Left lung (tissue), 14 donors: ENCODE measurements at regions of chr7 and their contacts with region 1.

Region 1: DNA sequence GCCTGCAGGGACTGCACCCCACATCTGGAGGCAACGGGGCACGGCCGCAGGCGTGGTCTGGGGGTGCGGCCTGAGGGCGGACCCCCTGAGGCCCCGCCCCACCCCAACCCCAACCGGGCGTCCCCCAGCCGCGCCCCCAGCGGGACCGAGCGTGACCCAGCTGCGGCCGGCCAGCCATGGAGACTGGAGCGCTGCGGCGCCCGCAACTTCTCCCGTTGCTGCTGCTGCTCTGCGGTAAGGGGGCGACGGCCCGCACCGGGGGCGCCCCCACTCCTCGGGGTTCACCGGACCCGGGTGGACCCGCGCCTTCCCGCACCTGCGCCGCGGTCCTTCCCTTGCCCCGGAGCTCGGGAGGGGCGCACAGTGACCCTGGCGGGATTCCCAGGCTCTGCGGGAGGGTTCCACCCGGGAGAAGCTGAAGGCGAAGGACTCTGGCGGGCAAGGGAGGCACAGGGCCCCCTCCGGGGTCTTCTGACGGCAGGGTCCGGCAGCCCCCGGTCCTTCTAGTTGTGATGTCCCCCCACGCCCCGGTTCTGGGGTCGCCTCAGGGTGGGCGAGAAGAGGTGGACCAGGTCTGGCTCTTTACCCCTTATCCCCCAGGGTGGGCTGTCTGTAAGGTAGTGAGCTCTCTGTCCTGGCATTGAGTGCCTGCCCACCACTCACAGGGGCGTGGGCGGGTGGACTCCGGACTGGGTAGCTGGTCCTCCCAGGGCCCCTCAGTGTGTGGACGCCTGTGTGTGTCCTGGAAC is at the start of gene RAMP3:
- DNase-seq: peak in 1 of 4 donors; percentile 81
- ATAC-seq: peak; percentile 8
- H3K4me3 ChIP-seq: peak within 1 kb of the TSS; percentile 6 to 47
- H3K27ac ChIP-seq: peak within 1 kb of the TSS; percentile 53 to 76
- H3K4me1 ChIP-seq: peaks cover 0 to 13% of the 10 kb centered on the region in 2 donors
- H3K27me3 ChIP-seq: peaks cover 9 to 34% of the 10 kb centered on the region in 2 donors
- CTCF ChIP-seq: no peak
- polyA plus RNA-seq, gene RAMP3: 12.5 to 28.1 (median 20.4) TPM

Region 2: GRCh38 chr7:45259966-45260646 is 102.3 kb after region 1 on chr7:
- intact Hi-C with region 1: loop called (anchors 2 to 10 kb)
- DNase-seq: peak; percentile 25 to 93 (median 57)
- ATAC-seq: peak; percentile 96
- H3K4me3 ChIP-seq: no peak overlapping the region
- H3K27ac ChIP-seq: no peak overlapping the region
- H3K4me1 ChIP-seq: peaks cover 0 to 7% of the 10 kb centered on the region in 2 donors
- H3K27me3 ChIP-seq: peaks cover 0 to 14% of the 10 kb centered on the region in 2 donors
- CTCF ChIP-seq: peak; percentile 99